PC-9 (cell line): ENCODE measurements at regions of chr2 and their contacts with region 1.

Region 1: DNA sequence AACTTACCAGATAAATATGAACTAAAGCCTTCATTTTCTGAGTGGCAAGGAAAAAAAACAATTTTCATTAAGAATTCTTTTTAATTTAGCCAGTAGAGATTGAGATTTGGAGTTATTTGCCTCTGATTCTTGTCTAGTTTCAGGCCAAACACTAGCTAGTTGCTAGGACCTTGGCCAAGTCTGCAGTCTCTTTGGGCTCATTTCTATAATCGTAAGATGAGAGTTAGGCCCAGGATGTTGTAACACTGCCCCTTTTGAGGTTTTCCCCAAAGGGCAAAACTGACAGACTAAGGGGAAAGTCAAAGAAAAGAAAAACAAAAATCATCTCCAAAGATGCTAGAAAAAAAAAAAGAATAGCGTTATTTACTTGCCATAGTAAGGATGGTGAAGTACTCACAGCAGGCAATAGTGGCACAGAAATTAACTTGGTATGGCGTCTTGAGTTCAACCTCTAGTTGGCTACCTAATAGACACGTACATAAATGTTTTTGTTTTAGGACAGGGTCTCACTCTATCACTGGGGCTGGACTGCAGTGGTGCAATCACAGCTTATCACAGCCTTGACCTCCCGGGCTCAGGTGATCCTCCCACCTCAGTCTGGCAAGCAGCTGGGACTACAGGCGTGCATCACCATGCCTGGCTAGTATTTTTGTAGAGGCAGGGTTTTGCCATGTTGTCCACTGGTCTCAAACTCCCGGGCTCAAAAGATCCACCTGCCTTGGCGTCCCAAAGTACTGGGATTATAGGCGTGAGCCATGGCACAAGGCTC is 23.0 kb upstream of the ADAM17 start:
- DNase-seq: no peak
- H3K4me3 ChIP-seq: no peak overlapping the region
- H3K27ac ChIP-seq: no peak overlapping the region
- H3K4me1 ChIP-seq: peaks cover 9% of the 10 kb centered on the region
- H3K27me3 ChIP-seq: no peaks in the 10 kb centered on the region
- CTCF ChIP-seq: no peak

Region 2: GRCh38 chr2:8004250-8004681 is 1574.4 kb before region 1 on chr2:
- CTCF ChIA-PET with region 1: no interaction called
- POLR2A ChIA-PET with region 1: no interaction called
- intact Hi-C with region 1: no loop called
- DNase-seq: no peak
- H3K4me3 ChIP-seq: no peak overlapping the region
- H3K27ac ChIP-seq: no peak overlapping the region
- H3K4me1 ChIP-seq: no peaks in the 10 kb centered on the region
- H3K27me3 ChIP-seq: peaks cover 6% of the 10 kb centered on the region
- CTCF ChIP-seq: no peak

Region 3: DNA sequence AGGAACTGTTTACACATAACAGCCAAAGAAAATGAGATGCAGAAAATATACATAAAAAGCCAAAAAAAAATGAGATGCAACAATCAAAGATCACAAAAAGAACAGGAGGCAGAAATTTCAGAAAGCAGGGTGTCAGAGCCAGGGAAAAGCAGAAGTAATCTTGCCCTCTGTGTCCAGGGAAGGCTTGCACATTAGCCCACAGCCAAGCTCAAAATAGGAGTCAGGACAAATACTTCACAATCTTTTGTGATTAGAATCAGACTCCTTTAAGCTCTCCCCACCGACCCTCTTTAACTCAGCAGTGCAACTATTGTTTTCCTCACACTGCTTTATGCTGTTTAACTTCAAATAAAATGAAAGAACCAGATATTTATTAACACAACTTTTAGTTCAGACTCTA is 69.7 kb before region 1 on chr2:
- CTCF ChIA-PET with region 1: no interaction called
- POLR2A ChIA-PET with region 1: no interaction called
- intact Hi-C with region 1: loop called (anchors 10 kb)
- DNase-seq: no peak
- H3K4me3 ChIP-seq: no peak overlapping the region
- H3K27ac ChIP-seq: no peak overlapping the region
- H3K4me1 ChIP-seq: no peaks in the 10 kb centered on the region
- H3K27me3 ChIP-seq: no peaks in the 10 kb centered on the region
- CTCF ChIP-seq: no peak

Region 4: GRCh38 chr2:9610781-9611548 is 32.3 kb after region 1 on chr2:
- CTCF ChIA-PET with region 1: no interaction called
- POLR2A ChIA-PET with region 1: no interaction called
- intact Hi-C with region 1: no loop called
- DNase-seq: no peak
- H3K4me3 ChIP-seq: no peak overlapping the region
- H3K27ac ChIP-seq: peak overlapping the region; percentile 21; the same call in 1 of the 2 replicates
- H3K4me1 ChIP-seq: peaks cover 61% of the 10 kb centered on the region
- H3K27me3 ChIP-seq: no peaks in the 10 kb centered on the region
- CTCF ChIP-seq: no peak

Region 5: DNA sequence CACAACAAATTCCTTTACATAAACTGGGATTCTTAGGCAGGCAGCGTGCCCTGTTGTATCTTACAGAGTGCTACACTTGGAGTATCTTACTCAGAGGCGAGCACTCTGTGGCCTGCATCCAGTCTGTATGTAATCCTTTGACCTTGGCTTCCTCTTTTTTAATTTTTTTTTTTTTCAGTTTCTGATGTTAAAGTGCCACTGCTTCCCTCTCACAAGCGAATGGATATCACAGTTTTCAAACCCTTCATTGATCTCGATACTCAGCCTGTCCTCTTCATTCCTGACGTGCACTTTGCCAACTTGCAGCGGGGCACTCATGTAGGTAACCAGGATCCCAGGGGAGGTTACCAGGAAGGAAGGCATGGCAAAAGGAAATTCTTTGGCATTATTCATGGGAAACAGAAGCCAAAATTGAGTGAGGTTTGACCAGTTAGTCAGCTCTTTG is 413.2 kb after region 1 on chr2:
- CTCF ChIA-PET with region 1: interaction called, 15 read pairs
- POLR2A ChIA-PET with region 1: no interaction called
- intact Hi-C with region 1: no loop called
- DNase-seq: no peak
- H3K4me3 ChIP-seq: no peak overlapping the region
- H3K27ac ChIP-seq: no peak overlapping the region
- H3K4me1 ChIP-seq: no peaks in the 10 kb centered on the region
- H3K27me3 ChIP-seq: no peaks in the 10 kb centered on the region
- CTCF ChIP-seq: no peak